PC-3 (cell line): ENCODE measurements at regions of chr1 and their contacts with region 1.

Region 1: DNA sequence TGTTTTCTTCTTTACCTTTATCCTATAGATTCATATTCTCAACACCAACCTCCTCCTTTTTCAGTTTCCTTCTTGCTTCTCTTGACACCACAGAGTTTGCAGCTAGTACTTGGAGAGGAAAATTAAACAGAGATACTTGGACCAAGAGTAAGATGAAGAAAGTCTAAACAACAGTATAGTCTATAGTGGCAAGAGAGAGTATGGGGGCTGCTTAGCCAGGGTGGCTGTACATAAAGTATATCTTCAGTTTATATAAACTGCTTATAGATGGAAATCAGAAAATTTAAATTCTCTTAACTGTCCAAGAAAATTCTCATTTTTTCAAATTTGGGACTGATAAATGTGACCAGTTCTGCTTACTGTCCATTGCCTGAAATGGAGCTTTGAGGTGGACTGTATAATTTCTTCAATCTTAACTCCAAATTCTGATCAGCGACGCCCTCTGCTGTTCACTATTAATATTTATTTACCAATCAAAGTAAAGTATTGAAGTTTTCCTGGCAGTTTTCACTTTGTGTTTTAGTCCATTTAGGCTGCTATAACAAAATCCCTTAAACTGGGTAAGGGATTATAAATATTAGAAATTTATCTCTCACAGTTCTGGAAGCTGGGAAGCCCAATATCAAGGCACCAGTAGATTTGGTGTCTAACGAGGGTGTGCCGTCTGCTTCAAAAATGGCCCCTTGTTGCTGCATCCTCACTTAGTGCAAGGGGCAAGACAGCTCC is 14.8 kb upstream of the METTL18 start:
- DNase-seq: peak; percentile 74
- ATAC-seq: peak; percentile 49
- H3K4me3 ChIP-seq: no peak overlapping the region
- H3K27ac ChIP-seq: no peak overlapping the region
- H3K4me1 ChIP-seq: peaks cover 8% of the 10 kb centered on the region
- H3K27me3 ChIP-seq: no peaks in the 10 kb centered on the region
- CTCF ChIP-seq: peak; percentile 87

Region 2: GRCh38 chr1:169586395-169587255 is 222.9 kb before region 1 on chr1 and contains the start of gene F5:
- CTCF ChIA-PET with region 1: interaction called, 5 read pairs
- POLR2A ChIA-PET with region 1: no interaction called
- intact Hi-C with region 1: loop called (anchors 10 kb)
- DNase-seq: peak; percentile 84
- ATAC-seq: peak; percentile 100
- H3K4me3 ChIP-seq: peak within 1 kb of the TSS; percentile 53
- H3K27ac ChIP-seq: no peak within 1 kb of the TSS
- H3K4me1 ChIP-seq: peaks cover 19% of the 10 kb centered on the region
- H3K27me3 ChIP-seq: peaks cover 24% of the 10 kb centered on the region
- CTCF ChIP-seq: peak; percentile 78
- total RNA-seq, gene F5: not detected in 2 replicates

Region 3: GRCh38 chr1:169601093-169601881 is 208.2 kb before region 1 on chr1:
- CTCF ChIA-PET with region 1: interaction called, 4 read pairs
- POLR2A ChIA-PET with region 1: no interaction called
- intact Hi-C with region 1: loop called (anchors 1 kb)
- DNase-seq: peak; percentile 74
- ATAC-seq: peak; percentile 76
- H3K4me3 ChIP-seq: no peak overlapping the region
- H3K27ac ChIP-seq: no peak overlapping the region
- H3K4me1 ChIP-seq: no peaks in the 10 kb centered on the region
- H3K27me3 ChIP-seq: peaks cover 39% of the 10 kb centered on the region
- CTCF ChIP-seq: peak; percentile 78